Mammary epithelial cell (primary cell): ENCODE measurements at regions of chr12 and their contacts with region 1.

Region 1: GRCh38 chr12:124852329-124852831 is 11.3 kb downstream of the SCARB1 start:
- DNase-seq: no peak
- H3K4me3 ChIP-seq: no peak overlapping the region
- H3K27ac ChIP-seq: no peak overlapping the region
- H3K4me1 ChIP-seq: peaks cover 5% of the 10 kb centered on the region
- H3K27me3 ChIP-seq: no peaks in the 10 kb centered on the region
- CTCF ChIP-seq: no peak

Region 2: GRCh38 chr12:124636138-124636978 is 216.0 kb before region 1 on chr12:
- CTCF ChIA-PET with region 1: no interaction called
- dilution Hi-C with region 1: loop called (anchors 10 kb)
- in situ Hi-C with region 1: no loop called
- intact Hi-C with region 1: no loop called
- DNase-seq: peak; percentile 96
- H3K4me3 ChIP-seq: no peak overlapping the region
- H3K27ac ChIP-seq: peak overlapping the region; percentile 71
- H3K4me1 ChIP-seq: peaks cover 64% of the 10 kb centered on the region
- H3K27me3 ChIP-seq: no peaks in the 10 kb centered on the region
- CTCF ChIP-seq: no peak

Region 3: GRCh38 chr12:124863416-124864325 is 11.3 kb after region 1 on chr12 and contains the start of gene SCARB1:
- CTCF ChIA-PET with region 1: no interaction called
- dilution Hi-C with region 1: no loop called
- in situ Hi-C with region 1: no loop called
- intact Hi-C with region 1: loop called (anchors 1 kb)
- DNase-seq: peak; percentile 72
- H3K4me3 ChIP-seq: peak within 1 kb of the TSS; percentile 74 to 91 (median 78)
- H3K27ac ChIP-seq: peak within 1 kb of the TSS; percentile 36
- H3K4me1 ChIP-seq: peaks cover 20% of the 10 kb centered on the region
- H3K27me3 ChIP-seq: no peaks in the 10 kb centered on the region
- CTCF ChIP-seq: no peak
- total RNA-seq, gene SCARB1: 44.8 to 60.9 TPM

Region 4: DNA sequence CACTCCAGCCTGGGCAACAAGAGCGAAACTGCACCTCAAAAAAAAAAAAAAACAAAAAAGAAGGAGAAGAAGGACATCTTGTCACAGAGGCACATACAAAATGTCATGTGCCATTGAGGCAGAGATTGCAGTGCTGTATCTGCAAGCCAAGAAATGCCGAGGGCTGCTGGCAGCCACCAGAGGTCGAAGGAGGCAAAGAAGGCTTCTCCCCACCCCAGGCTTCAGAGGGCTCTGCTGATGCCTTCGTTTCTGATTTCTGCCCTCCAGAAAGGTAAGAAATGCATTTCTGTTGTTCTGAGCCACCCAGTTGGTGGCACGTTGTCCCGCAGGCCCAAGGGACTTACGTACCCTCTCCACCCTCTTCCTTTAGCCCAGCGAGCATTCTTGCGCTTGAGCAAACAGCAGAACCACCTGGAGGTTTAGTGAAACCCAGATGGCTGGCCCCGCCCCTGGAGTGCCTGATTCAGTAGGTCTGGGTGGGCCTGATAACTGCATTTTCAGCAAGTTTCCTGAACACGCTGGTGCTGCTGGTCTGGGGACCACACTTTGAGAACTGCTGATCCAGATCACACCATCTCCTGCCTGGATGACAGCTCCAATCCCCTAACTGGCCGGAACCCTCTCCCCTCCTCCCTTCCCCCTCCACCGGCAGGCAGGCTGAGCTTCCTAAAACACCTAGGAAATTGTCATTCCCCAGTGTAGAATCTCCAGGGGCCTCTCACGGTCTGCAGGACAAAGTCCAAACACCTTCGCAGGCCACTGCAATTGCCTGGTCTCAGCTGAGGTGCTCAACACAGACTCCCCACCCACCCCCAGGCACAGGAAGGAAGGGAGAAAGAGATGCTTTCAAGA is 32.4 kb after region 1 on chr12:
- CTCF ChIA-PET with region 1: no interaction called
- dilution Hi-C with region 1: no loop called
- in situ Hi-C with region 1: no loop called
- intact Hi-C with region 1: no loop called
- DNase-seq: no peak
- H3K4me3 ChIP-seq: no peak overlapping the region
- H3K27ac ChIP-seq: no peak overlapping the region
- H3K4me1 ChIP-seq: no peaks in the 10 kb centered on the region
- H3K27me3 ChIP-seq: no peaks in the 10 kb centered on the region
- CTCF ChIP-seq: no peak